ENCODE measurements at regions of chr21 and their contacts with region 1.

Region 1: DNA sequence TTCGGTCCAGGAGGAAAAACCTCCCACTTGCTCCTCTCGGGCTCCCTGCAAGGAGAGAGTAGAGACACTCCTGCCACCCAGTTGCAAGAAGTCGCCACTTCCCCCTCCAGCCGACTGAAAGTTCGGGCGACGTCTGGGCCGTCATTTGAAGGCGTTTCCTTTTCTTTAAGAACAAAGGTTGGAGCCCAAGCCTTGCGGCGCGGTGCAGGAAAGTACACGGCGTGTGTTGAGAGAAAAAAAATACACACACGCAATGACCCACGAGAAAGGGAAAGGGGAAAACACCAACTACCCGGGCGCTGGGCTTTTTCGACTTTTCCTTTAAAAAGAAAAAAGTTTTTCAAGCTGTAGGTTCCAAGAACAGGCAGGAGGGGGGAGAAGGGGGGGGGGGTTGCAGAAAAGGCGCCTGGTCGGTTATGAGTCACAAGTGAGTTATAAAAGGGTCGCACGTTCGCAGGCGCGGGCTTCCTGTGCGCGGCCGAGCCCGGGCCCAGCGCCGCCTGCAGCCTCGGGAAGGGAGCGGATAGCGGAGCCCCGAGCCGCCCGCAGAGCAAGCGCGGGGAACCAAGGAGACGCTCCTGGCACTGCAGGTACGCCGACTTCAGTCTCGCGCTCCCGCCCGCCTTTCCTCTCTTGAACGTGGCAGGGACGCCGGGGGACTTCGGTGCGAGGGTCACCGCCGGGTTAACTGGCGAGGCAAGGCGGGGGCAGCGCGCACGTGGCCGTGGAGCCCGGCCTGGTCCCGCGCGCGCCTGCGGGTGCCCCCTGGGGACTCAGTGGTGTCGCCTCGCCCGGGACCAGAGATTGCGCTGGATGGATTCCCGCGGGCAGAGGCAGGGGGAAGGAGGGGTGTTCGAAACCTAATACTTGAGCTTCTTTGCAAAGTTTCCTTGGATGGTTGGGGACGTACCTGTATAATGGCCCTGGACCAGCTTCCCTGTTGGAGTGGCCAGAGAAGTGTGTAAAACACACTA is 45.3 kb downstream of the MRPL39 start:
- DNase-seq: peak; percentile 57 to 79 (median 78)
- ATAC-seq: peak; percentile 84 to 93
- H3K4me3 ChIP-seq: peak overlapping the region; percentile 36
- H3K27ac ChIP-seq: no peak overlapping the region
- H3K4me1 ChIP-seq: no peaks in the 10 kb centered on the region
- H3K27me3 ChIP-seq: no peaks in the 10 kb centered on the region

Region 2: DNA sequence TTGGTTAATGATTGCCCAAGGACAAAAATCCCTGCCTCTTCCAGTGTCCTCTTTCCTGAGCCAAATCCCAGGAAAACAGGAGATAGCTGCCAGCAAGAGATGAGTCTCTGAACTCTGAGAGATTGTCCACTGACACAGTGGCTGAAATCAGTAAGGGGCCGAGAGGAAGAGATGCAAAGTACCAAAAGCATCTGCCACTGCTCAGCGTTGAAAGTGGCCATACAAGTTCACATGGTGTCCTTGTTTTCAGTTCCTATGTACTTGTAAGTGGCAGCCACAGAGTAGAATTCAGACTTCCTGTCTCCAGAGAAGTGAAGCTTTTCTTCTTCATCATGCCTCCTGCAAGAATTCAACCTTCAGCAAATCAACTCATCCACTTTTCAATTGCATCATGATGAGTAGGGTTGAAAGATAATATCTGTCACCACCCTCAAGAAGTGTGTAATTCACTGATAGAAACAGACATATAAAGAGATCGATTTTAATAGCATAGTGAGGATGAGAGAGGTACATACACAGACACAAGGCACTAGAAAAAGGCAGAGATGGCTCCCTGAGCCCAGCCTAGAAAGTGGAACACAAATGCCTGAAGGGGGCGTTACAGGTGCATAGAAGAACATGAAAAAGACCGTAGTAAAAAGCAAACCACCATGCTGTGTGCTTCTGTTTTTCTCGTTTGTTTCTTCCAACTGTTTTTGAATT is 140.5 kb before region 1 on chr21:
- intact Hi-C with region 1: loop called in 1 of 4 experiments (anchors 5 kb)
- DNase-seq: peak in 1 of 3 donors; percentile 25
- ATAC-seq: peak; percentile 38 to 69
- H3K4me3 ChIP-seq: no peak overlapping the region
- H3K27ac ChIP-seq: no peak overlapping the region
- H3K4me1 ChIP-seq: no peaks in the 10 kb centered on the region
- H3K27me3 ChIP-seq: no peaks in the 10 kb centered on the region

Region 3: GRCh38 chr21:25607151-25608043 is 45.4 kb after region 1 on chr21 and contains the start of gene MRPL39:
- intact Hi-C with region 1: no loop called
- DNase-seq: peak; percentile 89 to 95 (median 94)
- ATAC-seq: peak; percentile 98
- H3K4me3 ChIP-seq: peak within 1 kb of the TSS; percentile 65
- H3K27ac ChIP-seq: peak within 1 kb of the TSS; percentile 76
- H3K4me1 ChIP-seq: no peaks in the 10 kb centered on the region
- H3K27me3 ChIP-seq: no peaks in the 10 kb centered on the region
- total RNA-seq, gene MRPL39: 30.6 to 38.3 (median 34.5) TPM

Measured in right cardiac atrium (tissue), 5 donors.